ENCODE measurements at regions of chr2 and their contacts with region 1.

Region 1: DNA sequence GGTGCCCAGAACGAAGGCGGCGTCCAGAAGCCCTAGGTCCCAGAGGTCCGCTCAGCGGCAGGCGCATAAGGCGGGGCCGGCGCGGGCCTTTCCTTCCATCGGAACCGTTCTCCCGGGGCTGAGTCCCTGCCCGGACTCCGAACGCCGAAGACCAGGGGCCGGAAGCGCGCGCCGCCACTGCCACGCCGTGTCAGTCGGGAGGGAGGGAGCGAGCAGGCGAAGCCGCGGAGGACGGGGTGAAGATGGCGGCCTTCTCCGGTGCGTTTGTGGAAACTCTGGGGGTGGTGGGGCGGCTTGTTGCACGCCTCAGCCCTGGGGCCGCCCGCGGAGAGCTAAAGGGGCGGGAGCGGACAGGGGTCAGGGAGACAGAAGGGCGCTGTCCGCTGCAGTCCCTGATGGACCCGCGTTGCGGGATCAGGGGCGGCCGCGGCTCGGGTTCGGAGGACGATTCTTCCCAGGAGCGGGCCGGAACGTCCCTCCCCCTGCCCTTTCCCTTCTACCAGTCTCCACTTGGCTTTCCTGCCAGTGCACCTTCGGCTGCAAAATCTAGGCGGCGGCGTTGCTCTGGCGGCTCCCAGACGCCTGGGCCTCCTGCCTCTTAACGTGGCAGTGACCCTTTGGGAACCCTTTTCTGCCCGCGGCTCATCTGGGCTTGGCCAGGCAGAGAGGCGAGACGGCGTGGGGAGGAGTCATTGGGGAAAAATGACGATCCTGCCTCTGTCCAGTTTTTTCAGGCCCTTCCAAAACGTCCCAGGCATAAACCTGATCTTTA is at the start of gene DDX1:
- DNase-seq: peak; percentile 88
- H3K4me3 Mint-ChIP-seq: peak within 1 kb of the TSS; percentile 81
- H3K27ac Mint-ChIP-seq: peak within 1 kb of the TSS; percentile 79
- H3K4me1 Mint-ChIP-seq: peaks cover 38% of the 10 kb centered on the region
- H3K27me3 Mint-ChIP-seq: no peaks in the 10 kb centered on the region
- total RNA-seq, gene DDX1: 55.4 to 55.6 TPM

Region 2: DNA sequence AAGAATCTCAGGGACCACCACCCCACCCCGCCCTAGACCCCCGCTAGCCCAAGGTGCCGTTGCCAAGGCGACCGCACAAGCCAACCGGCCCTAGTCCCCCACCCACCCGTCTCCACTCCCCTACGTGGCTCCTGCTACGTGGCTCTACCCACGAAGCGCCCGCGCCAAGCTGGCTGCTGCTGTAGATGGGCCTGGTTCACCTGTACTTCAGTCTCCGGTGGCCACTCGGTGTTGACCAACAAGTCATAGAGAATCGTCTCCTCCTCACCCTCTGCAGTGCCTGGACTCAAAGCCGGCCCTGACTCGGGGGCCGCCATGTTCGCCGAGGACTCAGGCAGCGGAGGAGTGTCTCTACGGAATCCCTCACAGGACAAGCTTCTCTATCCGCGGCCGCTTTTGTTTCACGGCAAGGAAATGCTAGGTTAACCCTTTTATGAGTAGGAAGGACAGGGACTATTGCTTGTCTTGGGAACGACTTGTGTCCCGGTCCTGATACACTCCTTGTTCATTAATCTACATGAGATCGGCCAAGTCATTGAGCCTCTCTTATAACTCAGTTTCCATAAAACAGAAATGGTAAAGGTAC is 30.8 kb before region 1 on chr2 and contains the start of gene NBAS:
- CTCF ChIA-PET with region 1: no interaction called
- POLR2A ChIA-PET with region 1: interaction called, 20 read pairs
- DNase-seq: peak; percentile 86
- H3K4me3 Mint-ChIP-seq: peak within 1 kb of the TSS; percentile 100
- H3K27ac Mint-ChIP-seq: peak within 1 kb of the TSS; percentile 90
- H3K4me1 Mint-ChIP-seq: peaks cover 36% of the 10 kb centered on the region
- H3K27me3 Mint-ChIP-seq: peaks cover 7% of the 10 kb centered on the region
- total RNA-seq, gene NBAS: 30.5 to 31.1 TPM

Region 3: DNA sequence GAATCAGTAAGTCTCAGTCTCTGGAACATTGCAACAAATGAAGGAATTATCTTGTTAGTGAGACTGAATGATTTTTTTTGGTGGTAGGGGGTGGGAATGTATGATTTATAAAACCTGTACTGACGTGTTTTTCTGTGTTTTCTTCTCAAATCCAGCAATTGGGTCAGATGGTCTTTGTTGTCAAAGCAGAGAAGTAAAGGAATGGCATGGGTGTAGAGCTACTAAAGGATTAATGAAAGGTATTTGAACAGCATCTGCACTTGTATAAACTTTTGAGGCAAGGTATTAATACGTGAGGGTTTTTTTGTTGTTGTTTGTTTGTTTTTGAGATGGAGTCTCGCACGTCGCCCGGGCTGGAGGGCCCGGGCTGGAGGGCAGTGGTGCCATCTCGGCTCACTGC is 10.5 kb after region 1 on chr2:
- CTCF ChIA-PET with region 1: interaction called, 3 read pairs
- POLR2A ChIA-PET with region 1: interaction called, 11 read pairs
- DNase-seq: no peak
- H3K4me3 Mint-ChIP-seq: no peak overlapping the region
- H3K27ac Mint-ChIP-seq: no peak overlapping the region
- H3K4me1 Mint-ChIP-seq: peaks cover 1% of the 10 kb centered on the region
- H3K27me3 Mint-ChIP-seq: no peaks in the 10 kb centered on the region

Region 4: DNA sequence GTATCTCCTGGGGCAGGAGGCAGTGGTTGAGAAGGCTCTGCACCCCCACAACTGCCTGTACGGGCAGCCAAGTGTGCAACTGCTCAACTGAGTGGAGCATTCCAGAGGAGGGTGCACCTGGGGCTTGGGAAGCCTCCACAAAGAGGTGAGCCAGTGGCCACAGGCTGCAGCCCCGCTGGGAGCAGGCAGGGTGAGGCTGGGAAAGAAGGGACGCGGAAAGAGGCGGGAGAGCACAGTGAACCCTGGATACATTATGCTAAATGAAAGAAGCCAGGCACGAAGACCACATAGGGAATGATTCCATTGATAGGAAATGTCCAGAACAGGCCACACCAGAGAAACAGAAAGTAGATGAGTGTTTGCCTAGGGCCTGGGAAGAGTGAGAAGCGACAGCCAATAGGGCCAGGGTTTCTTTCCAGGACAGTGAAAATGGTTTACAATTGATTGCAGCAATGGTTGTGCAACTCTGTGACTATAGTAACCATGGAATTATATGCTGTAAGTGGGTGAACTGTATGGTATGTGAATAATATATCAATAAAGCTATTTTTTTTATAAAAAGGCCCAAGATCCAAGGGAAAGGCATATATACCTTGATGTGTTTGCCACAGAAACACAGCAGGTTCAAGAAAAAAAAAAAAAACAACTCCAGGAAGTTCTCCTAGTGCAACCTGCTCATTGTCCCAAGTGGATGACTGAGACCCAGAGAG is 82.2 kb after region 1 on chr2:
- CTCF ChIA-PET with region 1: no interaction called
- POLR2A ChIA-PET with region 1: no interaction called
- DNase-seq: no peak
- H3K4me3 Mint-ChIP-seq: no peak overlapping the region
- H3K27ac Mint-ChIP-seq: no peak overlapping the region
- H3K4me1 Mint-ChIP-seq: no peaks in the 10 kb centered on the region
- H3K27me3 Mint-ChIP-seq: no peaks in the 10 kb centered on the region

Measured in activated CD4-positive, alpha-beta memory T cell treated with anti-CD3 and anti-CD28 coated beads, Interleukin-2, amount 10 ng/mL, durations not matched to agents 7 days and 5 days (primary cell).